Naive thymus-derived CD8-positive, alpha-beta T cell (primary cell): ENCODE measurements at regions of chr2 and their contacts with region 1.

Region 1: GRCh38 chr2:8681786-8682692 is at the start of gene ID2:
- DNase-seq: peak; percentile 96 to 99 (median 98)
- ATAC-seq: peak; percentile 68 to 77
- H3K4me3 Mint-ChIP-seq: peak within 1 kb of the TSS; percentile 92 to 100 (median 99)
- H3K27ac Mint-ChIP-seq: peak within 1 kb of the TSS; percentile 88 to 99 (median 97)
- H3K4me1 Mint-ChIP-seq: peaks cover 19 to 58% (median 47%) of the 10 kb centered on the region in 4 donors
- H3K27me3 Mint-ChIP-seq: peaks cover 9 to 22% (median 11%) of the 10 kb centered on the region in 5 donors
- polyA plus RNA-seq, gene ID2: 368 to 630 (median 479) TPM

Region 2: DNA sequence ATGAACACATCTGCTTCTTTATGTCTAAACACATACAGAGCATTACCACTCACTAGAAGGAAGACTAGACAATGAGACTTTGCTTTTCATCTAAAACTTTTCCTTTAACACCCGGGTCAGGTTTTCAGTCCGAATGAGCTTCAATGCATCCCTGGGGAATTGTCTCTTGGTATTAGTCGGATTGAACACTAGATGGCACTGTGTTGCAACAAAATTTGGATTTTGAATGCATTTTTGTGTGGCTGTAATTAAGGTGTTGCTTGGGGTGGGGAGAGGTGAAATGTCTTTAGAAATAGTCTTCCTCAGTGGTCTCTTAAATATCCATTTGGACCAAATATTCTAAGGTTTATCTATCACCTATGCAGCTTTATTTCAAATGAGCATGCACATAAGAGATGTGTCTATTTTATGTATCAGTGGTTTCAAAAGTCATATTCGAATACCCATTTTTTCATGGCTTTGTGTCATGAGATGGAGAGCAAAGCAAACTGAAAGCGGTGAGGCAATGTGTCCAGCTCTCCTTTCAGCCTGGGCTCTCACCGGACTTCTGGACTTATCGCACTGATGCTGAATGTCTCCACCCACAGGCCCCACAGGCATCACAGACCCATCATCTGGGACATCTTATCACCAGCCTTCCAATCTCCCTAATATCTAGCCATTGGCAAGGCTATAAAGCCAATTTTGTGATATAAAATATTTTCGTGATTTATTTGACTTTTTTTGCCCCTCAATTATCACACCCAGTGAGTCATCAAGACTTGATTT is 1254.6 kb before region 1 on chr2:
- POLR2A ChIA-PET with region 1: interaction called, 55 read pairs
- DNase-seq: peak in 6 of 10 donors; percentile 19 to 77 (median 62)
- ATAC-seq: peak; percentile 10 to 35
- H3K4me3 Mint-ChIP-seq: peak overlapping the region in 7 of 10 donors; percentile 2 to 48 (median 26)
- H3K27ac Mint-ChIP-seq: peak overlapping the region; percentile 47 to 99 (median 80)
- H3K4me1 Mint-ChIP-seq: peaks cover 34 to 46% (median 46%) of the 10 kb centered on the region in 4 donors
- H3K27me3 Mint-ChIP-seq: peaks cover 0 to 3% (median 0%) of the 10 kb centered on the region in 5 donors

Region 3: GRCh38 chr2:7450188-7450832 is 1231.7 kb before region 1 on chr2:
- POLR2A ChIA-PET with region 1: interaction called, 24 read pairs
- DNase-seq: peak in 8 of 10 donors; percentile 46 to 90 (median 76)
- ATAC-seq: peak; percentile 81 to 91
- H3K4me3 Mint-ChIP-seq: peak overlapping the region; percentile 46 to 84 (median 78)
- H3K27ac Mint-ChIP-seq: peak overlapping the region; percentile 96 to 99 (median 98)
- H3K4me1 Mint-ChIP-seq: peaks cover 51 to 86% (median 78%) of the 10 kb centered on the region in 4 donors
- H3K27me3 Mint-ChIP-seq: no peaks in the 10 kb centered on the region

Region 4: GRCh38 chr2:7725171-7725849 is 956.7 kb before region 1 on chr2:
- POLR2A ChIA-PET with region 1: interaction called, 31 read pairs
- DNase-seq: peak in 6 of 10 donors; percentile 12 to 74 (median 66)
- ATAC-seq: peak; percentile 79 to 86
- H3K4me3 Mint-ChIP-seq: peak overlapping the region; percentile 55 to 92 (median 82)
- H3K27ac Mint-ChIP-seq: peak overlapping the region; percentile 52 to 99 (median 88)
- H3K4me1 Mint-ChIP-seq: peaks cover 19 to 53% (median 46%) of the 10 kb centered on the region in 4 donors
- H3K27me3 Mint-ChIP-seq: no peaks in the 10 kb centered on the region

Region 5: GRCh38 chr2:8663997-8664396 is 18.0 kb before region 1 on chr2:
- POLR2A ChIA-PET with region 1: interaction called, 43 read pairs
- DNase-seq: peak in 3 of 10 donors; percentile 33 to 61 (median 45)
- ATAC-seq: peak; percentile 32 to 56
- H3K4me3 Mint-ChIP-seq: peak overlapping the region in 8 of 10 donors; percentile 39 to 85 (median 58)
- H3K27ac Mint-ChIP-seq: peak overlapping the region in 8 of 10 donors; percentile 2 to 84 (median 60)
- H3K4me1 Mint-ChIP-seq: peaks cover 15 to 39% (median 30%) of the 10 kb centered on the region in 4 donors
- H3K27me3 Mint-ChIP-seq: peaks cover 8 to 29% (median 12%) of the 10 kb centered on the region in 5 donors